Panc1 (cell line): ENCODE measurements at regions of chr12 and their contacts with region 1.

Region 1: GRCh38 chr12:53948650-53949570 is 5.8 kb upstream of the HOXC12 start:
- DNase-seq: no peak
- ATAC-seq: peak; percentile 59
- H3K4me3 ChIP-seq: no peak overlapping the region
- H3K27ac ChIP-seq: peak overlapping the region; percentile 88
- H3K4me1 ChIP-seq: peaks cover 89% of the 10 kb centered on the region
- H3K27me3 ChIP-seq: no peaks in the 10 kb centered on the region
- CTCF ChIP-seq: peak; percentile 76

Region 2: GRCh38 chr12:53770281-53770680 is 178.6 kb before region 1 on chr12:
- CTCF ChIA-PET with region 1: no interaction called
- POLR2A ChIA-PET with region 1: no interaction called
- in situ Hi-C with region 1: no loop called
- intact Hi-C with region 1: loop called (anchors 5 kb)
- DNase-seq: peak; percentile 91
- ATAC-seq: peak; percentile 93
- H3K4me3 ChIP-seq: no peak overlapping the region
- H3K27ac ChIP-seq: peak overlapping the region; percentile 98
- H3K4me1 ChIP-seq: peaks cover 51% of the 10 kb centered on the region
- H3K27me3 ChIP-seq: no peaks in the 10 kb centered on the region
- CTCF ChIP-seq: no peak

Region 3: GRCh38 chr12:53825246-53826081 is 123.4 kb before region 1 on chr12:
- CTCF ChIA-PET with region 1: no interaction called
- POLR2A ChIA-PET with region 1: no interaction called
- in situ Hi-C with region 1: no loop called
- intact Hi-C with region 1: loop called (anchors 5 kb)
- DNase-seq: peak; percentile 95
- ATAC-seq: peak; percentile 96
- H3K4me3 ChIP-seq: no peak overlapping the region
- H3K27ac ChIP-seq: peak overlapping the region; percentile 99
- H3K4me1 ChIP-seq: peaks cover 87% of the 10 kb centered on the region
- H3K27me3 ChIP-seq: no peaks in the 10 kb centered on the region
- CTCF ChIP-seq: no peak

Region 4: GRCh38 chr12:53899232-53899631 is 49.7 kb before region 1 on chr12:
- CTCF ChIA-PET with region 1: interaction called, 12 read pairs
- POLR2A ChIA-PET with region 1: no interaction called
- in situ Hi-C with region 1: no loop called
- intact Hi-C with region 1: no loop called
- DNase-seq: no peak
- ATAC-seq: no peak
- H3K4me3 ChIP-seq: no peak overlapping the region
- H3K27ac ChIP-seq: no peak overlapping the region
- H3K4me1 ChIP-seq: no peaks in the 10 kb centered on the region
- H3K27me3 ChIP-seq: no peaks in the 10 kb centered on the region
- CTCF ChIP-seq: no peak

Region 5: GRCh38 chr12:54082397-54082892 is 133.5 kb after region 1 on chr12:
- CTCF ChIA-PET with region 1: no interaction called
- POLR2A ChIA-PET with region 1: no interaction called
- in situ Hi-C with region 1: no loop called
- intact Hi-C with region 1: no loop called
- DNase-seq: no peak
- ATAC-seq: peak; percentile 48; the same call in 1 of the 2 replicates
- H3K4me3 ChIP-seq: no peak overlapping the region
- H3K27ac ChIP-seq: 0 out of 2 replicates have a peak overlapping the region, but pooled peaks have one; percentile 29
- H3K4me1 ChIP-seq: no peaks in the 10 kb centered on the region; the same call in none of the 2 replicates
- H3K27me3 ChIP-seq: no peaks in the 10 kb centered on the region
- CTCF ChIP-seq: no peak